ENCODE measurements at regions of chr1 and their contacts with region 1.

Region 1: GRCh38 chr1:179287946-179288345 is 5.7 kb upstream of the SOAT1 start:
- DNase-seq: no peak
- H3K4me3 ChIP-seq: no peak overlapping the region
- CTCF ChIP-seq: no peak

Region 2: GRCh38 chr1:179197690-179198297 is 90.2 kb before region 1 on chr1:
- in situ Hi-C with region 1: no loop called
- DNase-seq: no peak
- H3K4me3 ChIP-seq: no peak overlapping the region
- CTCF ChIP-seq: no peak

Region 3: DNA sequence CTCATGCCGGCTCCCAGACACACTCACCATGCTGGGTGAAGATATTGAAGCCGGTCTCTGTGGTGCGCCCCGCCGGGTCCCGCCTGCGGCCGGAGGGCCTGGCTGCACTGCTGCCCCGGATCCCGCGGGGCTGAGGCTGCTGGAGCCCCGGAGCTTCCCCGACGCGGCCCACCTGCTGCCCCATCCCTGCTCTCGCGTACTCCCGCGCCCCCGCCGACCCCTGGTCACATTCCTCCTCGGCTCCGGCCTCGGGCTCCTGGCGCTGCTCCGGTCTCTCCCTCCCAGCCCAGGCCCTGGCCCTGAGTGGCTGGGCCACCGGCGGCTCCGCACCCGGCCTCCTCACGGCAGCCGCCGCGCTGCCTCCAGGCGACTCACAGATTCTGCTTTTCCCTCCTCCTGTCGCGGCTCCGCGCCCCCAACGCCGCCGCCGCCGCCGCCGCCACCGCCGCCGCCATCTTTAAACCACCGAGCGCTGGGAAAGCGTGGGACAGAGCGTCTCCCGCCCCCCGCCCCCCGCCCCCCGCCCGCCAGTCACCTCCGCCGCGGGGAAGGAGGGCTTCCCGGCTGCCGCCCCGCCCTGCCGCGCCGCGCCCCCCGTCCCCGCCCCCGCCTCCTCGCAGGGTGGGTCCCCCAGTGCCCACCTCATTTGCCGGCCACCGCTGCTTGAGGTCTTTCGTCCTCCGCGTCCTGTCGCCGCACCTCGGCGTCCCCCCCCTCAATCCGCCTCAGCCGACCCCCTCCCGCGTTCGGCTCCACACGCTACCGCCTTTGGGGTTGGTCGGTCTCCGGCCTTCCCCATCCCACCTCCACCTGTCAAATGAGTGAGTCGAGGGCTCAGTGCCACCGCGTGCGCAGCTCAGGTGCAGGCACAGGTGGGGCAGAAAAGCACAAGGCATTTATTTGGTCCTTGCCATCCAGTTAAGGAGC is 58.5 kb before region 1 on chr1 and contains the start of gene ABL2:
- in situ Hi-C with region 1: loop called (anchors 10 kb)
- DNase-seq: no peak
- H3K4me3 ChIP-seq: peak within 1 kb of the TSS; percentile 88
- CTCF ChIP-seq: no peak

Region 4: DNA sequence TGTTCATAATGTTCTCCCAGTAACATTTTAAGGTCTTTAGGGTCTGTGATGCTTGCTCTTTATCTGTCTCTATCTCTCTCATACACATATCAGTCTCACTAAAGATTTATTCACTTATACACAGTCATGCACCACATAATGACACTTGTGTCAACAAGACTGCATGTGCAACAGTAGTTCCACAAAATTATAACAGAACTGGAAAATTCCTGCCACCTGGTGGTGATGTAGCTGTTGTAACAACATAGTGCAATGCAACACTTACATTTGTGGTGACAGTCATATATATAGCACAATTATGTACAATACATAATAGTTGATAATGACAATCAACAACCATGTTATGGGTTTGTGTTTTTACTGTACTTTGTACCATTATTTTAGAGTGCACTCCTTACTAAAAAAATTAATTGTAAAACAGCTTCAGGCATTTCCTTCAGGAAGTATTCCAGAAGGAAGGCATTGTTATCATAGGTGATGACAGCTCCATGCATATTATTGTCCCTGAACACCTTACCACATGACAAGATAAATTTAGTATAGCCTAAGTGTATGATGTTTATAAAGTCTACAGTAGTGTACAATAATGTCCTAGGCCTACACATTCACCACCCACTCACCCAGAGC is 311.8 kb after region 1 on chr1:
- in situ Hi-C with region 1: no loop called
- DNase-seq: no peak
- H3K4me3 ChIP-seq: no peak overlapping the region
- CTCF ChIP-seq: no peak